CD4-positive, alpha-beta T cell (primary cell): ENCODE measurements at regions of chr9 and their contacts with region 1.

Region 1: DNA sequence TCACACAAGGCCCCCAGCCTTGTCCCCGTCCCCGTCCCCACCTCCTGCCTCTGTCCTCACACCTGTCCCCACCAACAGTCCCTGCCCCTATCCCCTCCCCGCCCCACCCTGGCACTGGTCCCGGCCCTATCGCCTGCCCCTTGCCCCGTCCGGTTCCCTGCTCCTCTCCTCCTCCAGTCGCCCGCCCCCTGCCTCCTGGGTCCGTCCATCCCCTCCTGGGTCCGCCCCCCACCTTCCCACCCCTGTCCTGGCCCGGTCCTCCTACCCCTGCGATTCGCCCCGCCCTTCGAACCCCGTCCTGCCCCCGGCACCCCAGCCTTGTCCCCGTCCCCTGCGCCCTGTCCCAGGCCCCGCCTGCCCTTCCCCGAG is 389 bp downstream of the EDF1 start:
- DNase-seq: peak in 1 of 14 experiments; percentile 1
- ATAC-seq: peak; percentile 7
- H3K4me3 ChIP-seq: peak overlapping the region; percentile 57
- H3K4me3 Mint-ChIP-seq: peak overlapping the region; percentile 92
- H3K27ac ChIP-seq: peak overlapping the region; percentile 29 to 83
- H3K27ac Mint-ChIP-seq: peak overlapping the region; percentile 70
- H3K4me1 ChIP-seq: peaks cover 23% of the 10 kb centered on the region
- H3K4me1 Mint-ChIP-seq: peaks cover 15% of the 10 kb centered on the region
- H3K27me3 ChIP-seq: no peaks in the 10 kb centered on the region
- H3K27me3 Mint-ChIP-seq: no peaks in the 10 kb centered on the region
- CTCF ChIP-seq: no peak

Region 2: GRCh38 chr9:136849038-136849959 is 16.4 kb before region 1 on chr9 and contains the start of gene PHPT1:
- CTCF ChIA-PET with region 1: no interaction called
- POLR2A ChIA-PET with region 1: interaction called, 3 read pairs
- intact Hi-C with region 1: loop called in 1 of 2 experiments (anchors 1 kb)
- DNase-seq: peak; percentile 89 to 98 (median 94)
- ATAC-seq: peak; percentile 92
- H3K4me3 ChIP-seq: peak within 1 kb of the TSS; percentile 84
- H3K4me3 Mint-ChIP-seq: peak within 1 kb of the TSS; percentile 97
- H3K27ac ChIP-seq: peak within 1 kb of the TSS in 1 of 2 donors; percentile 60
- H3K27ac Mint-ChIP-seq: peak within 1 kb of the TSS; percentile 91
- H3K4me1 ChIP-seq: peaks cover 45% of the 10 kb centered on the region
- H3K4me1 Mint-ChIP-seq: peaks cover 10% of the 10 kb centered on the region
- H3K27me3 ChIP-seq: peaks cover 15 to 16% of the 10 kb centered on the region in 2 experiments
- H3K27me3 Mint-ChIP-seq: peaks cover 21% of the 10 kb centered on the region
- CTCF ChIP-seq: no peak
- total RNA-seq, gene PHPT1: 13.6 to 17.8 TPM

Region 3: DNA sequence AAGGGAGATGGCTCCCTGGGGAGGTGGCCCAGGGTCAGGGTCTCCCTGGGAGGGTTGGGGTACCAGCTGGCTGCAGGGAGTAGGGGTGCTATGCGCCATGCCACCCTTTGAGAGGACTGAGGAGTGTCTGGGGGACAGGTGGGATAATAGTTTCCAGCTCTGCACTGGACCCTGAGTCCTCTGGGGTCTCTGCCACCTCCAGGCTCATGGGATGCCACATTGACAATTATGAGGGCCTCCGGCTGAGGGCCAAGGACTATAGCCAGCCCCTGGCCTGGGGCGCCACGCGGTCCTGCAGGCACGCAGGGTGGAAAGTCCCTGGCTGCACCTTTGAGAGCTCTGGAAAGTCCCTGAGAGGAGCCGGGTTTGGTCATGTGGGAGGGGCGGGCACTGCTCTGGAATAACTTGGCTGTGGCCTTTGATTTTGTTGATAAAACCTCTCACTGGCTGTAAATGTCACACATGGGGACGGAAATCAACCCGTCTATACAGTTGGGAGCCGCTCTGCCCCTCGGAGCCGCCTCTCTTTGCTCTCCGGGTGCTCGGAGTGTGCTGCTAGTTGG is 36.6 kb after region 1 on chr9:
- CTCF ChIA-PET with region 1: no interaction called
- POLR2A ChIA-PET with region 1: interaction called, 4 read pairs
- intact Hi-C with region 1: loop called in 1 of 2 experiments (anchors 1 kb)
- DNase-seq: peak; percentile 45 to 95 (median 76)
- ATAC-seq: peak; percentile 85
- H3K4me3 ChIP-seq: peak overlapping the region; percentile 53
- H3K4me3 Mint-ChIP-seq: peak overlapping the region; percentile 67
- H3K27ac ChIP-seq: peak overlapping the region; percentile 94 to 95
- H3K27ac Mint-ChIP-seq: peak overlapping the region; percentile 91
- H3K4me1 ChIP-seq: peaks cover 44% of the 10 kb centered on the region
- H3K4me1 Mint-ChIP-seq: peaks cover 35% of the 10 kb centered on the region
- H3K27me3 ChIP-seq: no peaks in the 10 kb centered on the region
- H3K27me3 Mint-ChIP-seq: no peaks in the 10 kb centered on the region
- CTCF ChIP-seq: no peak

Region 4: GRCh38 chr9:136944519-136945279 is 79.0 kb after region 1 on chr9 and contains the starts of genes C8G and FBXW5:
- CTCF ChIA-PET with region 1: no interaction called
- POLR2A ChIA-PET with region 1: no interaction called
- intact Hi-C with region 1: loop called in 1 of 2 experiments (anchors 5 kb)
- DNase-seq: peak; percentile 84 to 97 (median 94)
- ATAC-seq: peak; percentile 86
- H3K4me3 ChIP-seq: peak within 1 kb of the TSS; percentile 69
- H3K4me3 Mint-ChIP-seq: peak within 1 kb of the TSS; percentile 87
- H3K27ac ChIP-seq: peak within 1 kb of the TSS in 1 of 2 donors; percentile 21
- H3K27ac Mint-ChIP-seq: peak within 1 kb of the TSS; percentile 59
- H3K4me1 ChIP-seq: peaks cover 49% of the 10 kb centered on the region
- H3K4me1 Mint-ChIP-seq: peaks cover 5% of the 10 kb centered on the region
- H3K27me3 ChIP-seq: no peaks in the 10 kb centered on the region
- H3K27me3 Mint-ChIP-seq: no peaks in the 10 kb centered on the region
- CTCF ChIP-seq: peak; percentile 96
- total RNA-seq, gene C8G: not detected
- total RNA-seq, gene FBXW5: 41.0 to 41.7 TPM

Region 5: GRCh38 chr9:137878146-137878941 is 1012.6 kb after region 1 on chr9:
- CTCF ChIA-PET with region 1: no interaction called
- POLR2A ChIA-PET with region 1: no interaction called
- intact Hi-C with region 1: no loop called
- DNase-seq: peak in 4 of 14 experiments; percentile 12 to 52 (median 34)
- ATAC-seq: peak; percentile 32
- H3K4me3 ChIP-seq: no peak overlapping the region
- H3K4me3 Mint-ChIP-seq: no peak overlapping the region
- H3K27ac ChIP-seq: no peak overlapping the region
- H3K27ac Mint-ChIP-seq: no peak overlapping the region
- H3K4me1 ChIP-seq: no peaks in the 10 kb centered on the region
- H3K4me1 Mint-ChIP-seq: peaks cover 4% of the 10 kb centered on the region
- H3K27me3 ChIP-seq: peaks cover 21 to 34% of the 10 kb centered on the region in 2 experiments
- H3K27me3 Mint-ChIP-seq: peaks cover 50% of the 10 kb centered on the region
- CTCF ChIP-seq: no peak